ENCODE measurements at regions of chr9 and their contacts with region 1.

Region 1: GRCh38 chr9:93566408-93567270 is 9.7 kb upstream of the PHF2 start:
- DNase-seq: peak; percentile 93
- ATAC-seq: peak; percentile 99
- H3K4me3 ChIP-seq: peak overlapping the region; percentile 73
- H3K27ac ChIP-seq: peak overlapping the region; percentile 57
- H3K4me1 ChIP-seq: peaks cover 7% of the 10 kb centered on the region
- H3K27me3 ChIP-seq: no peaks in the 10 kb centered on the region
- CTCF ChIP-seq: peak; percentile 72

Region 2: DNA sequence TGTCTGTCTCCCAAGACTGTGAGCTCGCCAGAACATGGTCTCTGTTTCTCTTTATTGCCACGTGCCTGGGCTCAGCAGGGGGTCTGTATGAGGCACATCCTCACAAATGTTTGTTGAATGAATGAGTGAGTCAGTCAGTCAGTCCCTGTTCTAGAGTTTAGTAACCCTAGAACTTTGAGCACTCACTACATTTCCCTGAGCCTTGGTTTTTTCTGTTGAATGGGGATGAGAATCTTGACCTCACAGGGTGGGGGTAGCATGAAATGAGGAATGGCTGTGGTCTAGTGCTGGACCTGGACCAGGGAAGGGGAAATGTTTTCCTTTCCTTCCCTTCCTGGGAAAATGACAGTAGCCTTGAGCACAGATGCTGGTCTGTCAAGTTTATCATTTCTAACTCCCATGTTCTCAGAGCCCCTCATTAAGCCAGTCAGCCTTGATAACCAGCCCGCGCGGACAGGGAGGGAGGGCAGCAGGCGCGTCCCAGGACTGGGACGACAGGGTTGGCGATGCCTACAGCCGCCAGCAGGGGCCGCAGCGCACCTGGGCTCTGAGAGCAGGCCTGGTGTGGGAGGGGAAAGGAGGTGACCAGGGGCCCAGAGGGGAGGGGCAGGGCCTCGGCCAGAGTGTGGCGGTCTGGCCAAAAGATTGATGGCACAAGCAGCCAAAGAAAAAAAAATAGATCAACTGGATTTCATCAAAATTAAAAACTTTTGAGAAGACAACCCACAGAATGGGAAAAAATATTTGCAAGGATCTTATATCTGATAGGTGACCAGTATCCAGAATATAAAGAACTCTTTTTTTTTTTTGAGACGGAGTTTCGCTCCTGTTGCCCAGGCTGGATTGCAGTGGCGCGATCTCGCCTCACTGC is 406.8 kb before region 1 on chr9:
- CTCF ChIA-PET with region 1: no interaction called
- POLR2A ChIA-PET with region 1: no interaction called
- intact Hi-C with region 1: loop called (anchors 10 kb)
- DNase-seq: peak; percentile 84
- ATAC-seq: peak; percentile 99
- H3K4me3 ChIP-seq: peak overlapping the region; percentile 51
- H3K27ac ChIP-seq: no peak overlapping the region
- H3K4me1 ChIP-seq: peaks cover 6% of the 10 kb centered on the region
- H3K27me3 ChIP-seq: no peaks in the 10 kb centered on the region
- CTCF ChIP-seq: peak; percentile 94

Region 3: GRCh38 chr9:93319992-93320500 is 246.6 kb before region 1 on chr9:
- CTCF ChIA-PET with region 1: no interaction called
- POLR2A ChIA-PET with region 1: no interaction called
- intact Hi-C with region 1: loop called (anchors 10 kb)
- DNase-seq: no peak
- ATAC-seq: no peak
- H3K4me3 ChIP-seq: no peak overlapping the region
- H3K27ac ChIP-seq: no peak overlapping the region
- H3K4me1 ChIP-seq: no peaks in the 10 kb centered on the region
- H3K27me3 ChIP-seq: no peaks in the 10 kb centered on the region
- CTCF ChIP-seq: no peak

Region 4: DNA sequence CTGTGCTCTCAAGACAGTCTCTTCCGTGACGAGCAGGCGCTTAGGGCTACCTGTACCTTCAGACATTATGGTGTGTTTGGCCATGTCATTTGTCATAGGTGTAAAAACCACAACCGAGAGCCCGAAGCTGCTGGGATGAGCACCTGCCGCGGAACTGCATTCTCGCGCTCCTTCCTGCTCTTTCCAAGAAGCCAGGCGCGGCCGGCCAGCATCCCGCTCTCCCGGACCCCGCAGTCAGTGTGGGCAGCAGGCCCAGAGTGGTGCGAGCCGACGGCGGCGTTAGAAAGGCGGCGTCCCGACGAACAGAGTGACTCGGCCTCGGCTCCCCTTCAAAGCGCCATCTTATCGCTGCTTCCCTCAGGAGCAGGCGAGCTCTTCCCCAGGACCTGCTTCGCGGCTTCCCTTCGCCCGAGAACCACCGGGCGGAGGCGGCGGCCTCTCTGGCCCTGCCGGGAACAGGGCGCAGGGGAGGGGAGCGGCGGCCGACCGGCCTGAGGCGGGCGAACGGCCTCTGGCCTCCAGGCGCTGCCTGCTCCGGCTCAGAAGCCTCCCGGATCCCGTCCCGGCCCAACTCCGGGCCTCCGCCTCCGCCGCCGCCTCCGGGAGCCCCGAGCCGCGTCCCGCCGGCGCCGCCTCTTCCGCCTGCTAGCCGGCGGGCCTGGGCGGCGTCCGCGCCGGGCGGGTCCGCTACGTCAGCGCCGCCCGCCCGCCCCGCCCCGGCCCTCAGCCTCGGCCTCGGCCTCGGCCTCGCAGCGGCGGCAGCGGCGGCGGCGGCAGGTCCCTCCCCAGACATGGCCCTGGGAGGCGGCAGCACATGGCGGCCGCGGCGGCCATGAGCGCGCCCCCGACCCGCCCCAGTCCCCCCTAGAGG is 115.5 kb before region 1 on chr9 and contains the start of gene FAM120A:
- CTCF ChIA-PET with region 1: no interaction called
- POLR2A ChIA-PET with region 1: no interaction called
- intact Hi-C with region 1: loop called (anchors 1 kb)
- DNase-seq: peak; percentile 81
- ATAC-seq: peak; percentile 75
- H3K4me3 ChIP-seq: peak within 1 kb of the TSS; percentile 88
- H3K27ac ChIP-seq: peak within 1 kb of the TSS; percentile 78
- H3K4me1 ChIP-seq: peaks cover 16% of the 10 kb centered on the region
- H3K27me3 ChIP-seq: no peaks in the 10 kb centered on the region
- CTCF ChIP-seq: no peak
- total RNA-seq, gene FAM120A: 89.6 and 95.4 TPM in 2 replicates

Region 5: GRCh38 chr9:93962561-93963440 is 396.2 kb after region 1 on chr9:
- CTCF ChIA-PET with region 1: no interaction called
- POLR2A ChIA-PET with region 1: no interaction called
- intact Hi-C with region 1: loop called (anchors 10 kb)
- DNase-seq: peak; percentile 82
- ATAC-seq: peak; percentile 84
- H3K4me3 ChIP-seq: peak overlapping the region; percentile 56
- H3K27ac ChIP-seq: no peak overlapping the region
- H3K4me1 ChIP-seq: no peaks in the 10 kb centered on the region; the same call in 1 of the 2 replicates
- H3K27me3 ChIP-seq: no peaks in the 10 kb centered on the region
- CTCF ChIP-seq: peak; percentile 78